ENCODE measurements at regions of chr1 and their contacts with region 1.

Region 1: DNA sequence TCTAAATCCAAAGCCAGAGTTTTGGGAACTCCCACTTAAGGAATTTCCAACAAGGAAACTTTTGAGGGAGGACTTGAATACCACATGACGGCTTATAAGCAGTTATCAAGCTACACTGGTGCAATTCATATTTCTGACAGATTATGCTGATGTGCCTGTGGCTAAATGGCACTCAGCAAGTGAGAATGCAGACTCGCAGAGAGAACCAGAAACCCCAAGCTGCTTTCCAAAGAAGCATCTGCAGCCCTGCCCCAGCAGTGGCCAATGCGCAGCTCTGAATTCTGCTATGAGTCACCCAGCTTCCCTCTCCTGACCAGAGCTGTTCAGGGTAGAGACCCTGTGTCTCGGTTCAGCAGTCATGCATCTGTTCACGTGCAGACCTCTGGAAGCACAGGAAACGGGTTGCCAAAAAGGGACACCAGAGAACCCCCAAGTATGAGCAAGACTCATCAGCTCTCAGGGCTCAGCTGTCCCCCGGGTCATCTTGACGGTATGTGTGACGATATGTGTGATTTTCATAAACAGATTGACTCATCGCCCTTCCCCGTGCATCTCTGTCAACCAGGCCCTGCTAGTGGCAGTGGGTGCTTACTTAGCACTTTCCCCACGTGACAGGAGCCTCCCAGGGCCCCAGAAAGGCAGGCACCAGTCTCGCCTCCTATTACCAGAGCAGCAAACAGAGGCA is 76.3 kb downstream of the ITPKB start:
- DNase-seq: peak; percentile 67 to 96 (median 81)
- ATAC-seq: peak; percentile 85
- H3K4me3 ChIP-seq: no peak overlapping the region
- H3K4me3 Mint-ChIP-seq: peak overlapping the region; percentile 71
- H3K27ac ChIP-seq: peak overlapping the region in 1 of 2 donors; percentile 47
- H3K27ac Mint-ChIP-seq: no peak overlapping the region
- H3K4me1 ChIP-seq: no peaks in the 10 kb centered on the region
- H3K4me1 Mint-ChIP-seq: no peaks in the 10 kb centered on the region
- H3K27me3 ChIP-seq: no peaks in the 10 kb centered on the region
- H3K27me3 Mint-ChIP-seq: no peaks in the 10 kb centered on the region
- CTCF ChIP-seq: no peak

Region 2: DNA sequence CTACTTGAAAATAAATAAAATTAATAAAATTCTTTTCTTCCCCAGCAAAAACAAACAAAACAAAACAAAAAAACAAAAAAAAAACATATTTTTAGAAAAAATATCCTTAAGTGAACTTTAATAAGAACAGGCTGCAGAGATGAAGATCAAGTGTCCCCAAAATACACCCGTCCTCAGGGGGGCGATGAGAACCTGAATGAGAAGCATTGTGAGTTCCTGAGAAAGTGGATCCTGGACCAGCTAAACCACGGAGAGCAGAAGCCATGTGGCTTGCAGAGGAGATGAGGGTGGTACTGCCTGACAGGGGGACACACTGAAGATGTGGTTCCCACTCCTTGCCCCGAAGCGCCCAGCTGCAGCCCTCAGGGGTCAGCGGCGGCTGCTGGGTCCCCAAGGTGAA is 13.0 kb before region 1 on chr1:
- CTCF ChIA-PET with region 1: interaction called, 13 read pairs
- POLR2A ChIA-PET with region 1: interaction called, 12 read pairs
- intact Hi-C with region 1: loop called in 1 of 2 experiments (anchors 1 kb)
- DNase-seq: peak in 9 of 14 experiments; percentile 34 to 72 (median 53)
- ATAC-seq: peak; percentile 14
- H3K4me3 ChIP-seq: no peak overlapping the region
- H3K4me3 Mint-ChIP-seq: peak overlapping the region; percentile 12
- H3K27ac ChIP-seq: no peak overlapping the region
- H3K27ac Mint-ChIP-seq: no peak overlapping the region
- H3K4me1 ChIP-seq: peaks cover 45% of the 10 kb centered on the region
- H3K4me1 Mint-ChIP-seq: peaks cover 26% of the 10 kb centered on the region
- H3K27me3 ChIP-seq: no peaks in the 10 kb centered on the region
- H3K27me3 Mint-ChIP-seq: no peaks in the 10 kb centered on the region
- CTCF ChIP-seq: peak; percentile 42

Region 3: GRCh38 chr1:226702957-226703831 is 40.4 kb after region 1 on chr1:
- CTCF ChIA-PET with region 1: no interaction called
- POLR2A ChIA-PET with region 1: interaction called, 14 read pairs
- intact Hi-C with region 1: loop called in 1 of 2 experiments (anchors 5 kb)
- DNase-seq: peak; percentile 56 to 94 (median 75)
- ATAC-seq: peak; percentile 71
- H3K4me3 ChIP-seq: peak overlapping the region; percentile 65
- H3K4me3 Mint-ChIP-seq: peak overlapping the region; percentile 84
- H3K27ac ChIP-seq: peak overlapping the region; percentile 71 to 95
- H3K27ac Mint-ChIP-seq: peak overlapping the region; percentile 95
- H3K4me1 ChIP-seq: peaks cover 74% of the 10 kb centered on the region
- H3K4me1 Mint-ChIP-seq: peaks cover 91% of the 10 kb centered on the region
- H3K27me3 ChIP-seq: no peaks in the 10 kb centered on the region
- H3K27me3 Mint-ChIP-seq: no peaks in the 10 kb centered on the region
- CTCF ChIP-seq: no peak